HEK293 (cell line): ENCODE measurements at regions of chr10 and their contacts with region 1.

Region 1: DNA sequence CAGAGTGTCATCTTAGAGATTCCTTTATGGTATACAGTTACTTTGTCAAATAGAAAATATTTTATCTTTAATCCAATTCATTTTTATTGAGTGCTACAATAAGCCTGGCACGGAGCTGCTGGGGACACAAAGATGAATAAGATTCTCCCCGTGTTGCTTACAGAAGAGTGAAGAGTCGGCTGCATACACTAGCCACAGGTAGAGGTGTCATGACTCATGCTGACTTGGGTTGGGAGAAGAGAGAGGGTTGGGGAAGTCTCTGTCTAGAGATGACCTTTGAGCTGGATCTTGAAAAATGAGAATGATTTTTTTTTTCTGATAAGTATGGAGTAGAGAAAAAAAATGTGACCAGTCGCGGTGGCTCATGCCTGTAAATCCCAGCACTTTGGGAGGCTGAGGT is 289.9 kb upstream of the CELF2 start:
- H3K4me3 ChIP-seq: no peak overlapping the region
- H3K27ac ChIP-seq: no peak overlapping the region
- H3K4me1 ChIP-seq: no peaks in the 10 kb centered on the region
- CTCF ChIP-seq: no peak

Region 2: GRCh38 chr10:10515479-10516204 is 212.2 kb before region 1 on chr10:
- CTCF ChIA-PET with region 1: no interaction called
- POLR2A ChIA-PET with region 1: no interaction called
- H3K4me3 ChIP-seq: no peak overlapping the region
- H3K27ac ChIP-seq: no peak overlapping the region
- H3K4me1 ChIP-seq: peaks cover 3% of the 10 kb centered on the region; the same call in 1 of the 2 replicates
- CTCF ChIP-seq: no peak

Region 3: GRCh38 chr10:10745291-10745690 is 17.5 kb after region 1 on chr10:
- CTCF ChIA-PET with region 1: no interaction called
- POLR2A ChIA-PET with region 1: interaction called, 10 read pairs
- H3K4me3 ChIP-seq: no peak overlapping the region
- H3K27ac ChIP-seq: no peak overlapping the region
- H3K4me1 ChIP-seq: no peaks in the 10 kb centered on the region
- CTCF ChIP-seq: no peak

Region 4: GRCh38 chr10:10930979-10931743 is 203.3 kb after region 1 on chr10:
- CTCF ChIA-PET with region 1: no interaction called
- POLR2A ChIA-PET with region 1: no interaction called
- H3K4me3 ChIP-seq: no peak overlapping the region
- H3K27ac ChIP-seq: no peak overlapping the region
- H3K4me1 ChIP-seq: no peaks in the 10 kb centered on the region
- CTCF ChIP-seq: no peak